PC-9 (cell line): ENCODE measurements at regions of chr14 and their contacts with region 1.

Region 1: DNA sequence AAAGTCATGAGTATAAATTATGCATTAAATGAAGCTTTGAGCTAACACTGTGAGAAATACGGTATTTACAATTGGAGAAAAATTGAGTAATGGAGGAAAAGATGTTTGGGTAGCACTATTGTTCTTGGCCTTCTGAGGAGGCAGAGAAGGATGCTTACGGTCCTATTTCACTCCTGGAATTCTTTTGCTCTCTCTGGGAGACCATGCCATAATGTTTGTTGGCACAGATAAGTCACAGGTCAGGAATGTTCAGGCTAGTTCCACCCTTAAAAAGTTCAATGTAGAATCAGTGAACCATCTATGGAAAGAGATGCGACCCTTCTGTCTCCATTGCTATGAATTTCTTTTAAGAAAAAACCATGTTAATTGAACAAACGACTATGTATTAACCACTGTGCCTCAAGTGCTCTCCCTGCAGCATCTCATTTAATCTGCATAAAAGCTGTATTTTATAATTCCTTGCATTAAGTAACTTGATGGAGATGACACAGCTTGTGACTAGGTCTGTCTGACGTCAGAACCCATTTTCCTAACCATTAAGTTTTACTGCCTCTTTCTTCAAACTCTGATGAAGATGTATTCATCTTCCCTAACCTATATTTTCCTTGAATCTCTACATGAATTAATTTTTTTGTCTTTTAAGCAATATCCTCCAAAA is 9.5 kb downstream of the BATF start:
- DNase-seq: peak in 1 of 2 experiments; percentile 76
- H3K4me3 ChIP-seq: no peak overlapping the region
- H3K27ac ChIP-seq: peak overlapping the region; percentile 33
- H3K4me1 ChIP-seq: peaks cover 54% of the 10 kb centered on the region
- H3K27me3 ChIP-seq: no peaks in the 10 kb centered on the region
- CTCF ChIP-seq: no peak

Region 2: DNA sequence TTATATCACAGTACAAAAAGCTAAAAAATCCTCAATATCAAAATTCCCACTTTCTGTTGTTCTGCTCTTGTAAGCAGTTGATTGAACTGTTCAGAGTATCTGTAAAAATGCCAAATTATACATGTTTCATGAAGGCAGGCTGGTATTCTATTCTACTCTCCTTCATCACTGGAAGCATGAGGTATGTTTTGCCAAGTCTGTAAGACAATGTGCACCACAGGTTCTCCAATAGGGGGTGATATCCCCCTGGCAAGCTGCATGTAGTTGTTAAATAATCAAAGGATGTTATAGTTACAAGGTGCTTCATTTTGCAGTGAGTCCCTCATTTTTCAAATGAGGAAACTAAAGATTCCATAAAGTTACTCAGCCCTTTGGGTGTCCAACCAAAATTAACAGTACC is 389.8 kb before region 1 on chr14:
- CTCF ChIA-PET with region 1: no interaction called
- POLR2A ChIA-PET with region 1: interaction called, 13 read pairs
- intact Hi-C with region 1: no loop called
- DNase-seq: peak in 1 of 2 experiments; percentile 28
- H3K4me3 ChIP-seq: no peak overlapping the region
- H3K27ac ChIP-seq: peak overlapping the region; percentile 7; the same call in 1 of the 2 replicates
- H3K4me1 ChIP-seq: no peaks in the 10 kb centered on the region
- H3K27me3 ChIP-seq: no peaks in the 10 kb centered on the region
- CTCF ChIP-seq: peak; percentile 61

Region 3: DNA sequence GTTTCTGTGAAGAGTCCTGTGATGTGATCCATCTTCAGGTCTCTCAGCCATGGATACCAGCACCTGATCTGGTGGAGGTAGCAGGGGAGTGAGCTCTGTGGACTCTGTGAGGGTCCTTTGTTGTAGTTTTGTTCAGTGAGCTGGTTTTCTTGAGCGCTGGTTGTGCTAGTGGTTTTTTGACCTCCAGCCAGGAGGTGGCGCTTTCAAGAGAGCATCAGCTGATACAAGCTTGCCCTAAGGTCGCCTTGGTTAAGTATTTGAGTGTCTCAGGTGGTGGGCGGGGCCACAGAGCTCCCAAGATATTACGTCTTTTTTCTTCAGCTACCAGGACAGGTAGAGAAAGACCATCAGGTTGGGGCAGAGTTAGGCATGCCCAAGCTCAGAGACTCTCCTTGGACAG is 269.0 kb after region 1 on chr14:
- CTCF ChIA-PET with region 1: no interaction called
- POLR2A ChIA-PET with region 1: interaction called, 12 read pairs
- intact Hi-C with region 1: no loop called
- DNase-seq: no peak
- H3K4me3 ChIP-seq: no peak overlapping the region
- H3K27ac ChIP-seq: no peak overlapping the region
- H3K4me1 ChIP-seq: no peaks in the 10 kb centered on the region
- H3K27me3 ChIP-seq: no peaks in the 10 kb centered on the region
- CTCF ChIP-seq: peak; percentile 52; the same call in 1 of the 2 replicates